Lower lobe of right lung (tissue), 2 donors: ENCODE measurements at regions of chr10 and their contacts with region 1.

Region 1: GRCh38 chr10:110893559-110894179 is 21.9 kb downstream of the PDCD4 start:
- DNase-seq: no peak
- ATAC-seq: peak; percentile 78
- H3K4me3 ChIP-seq: no peak overlapping the region
- H3K27ac ChIP-seq: no peak overlapping the region
- H3K4me1 ChIP-seq: no peaks in the 10 kb centered on the region
- H3K27me3 ChIP-seq: no peaks in the 10 kb centered on the region
- CTCF ChIP-seq: peak; percentile 67

Region 2: DNA sequence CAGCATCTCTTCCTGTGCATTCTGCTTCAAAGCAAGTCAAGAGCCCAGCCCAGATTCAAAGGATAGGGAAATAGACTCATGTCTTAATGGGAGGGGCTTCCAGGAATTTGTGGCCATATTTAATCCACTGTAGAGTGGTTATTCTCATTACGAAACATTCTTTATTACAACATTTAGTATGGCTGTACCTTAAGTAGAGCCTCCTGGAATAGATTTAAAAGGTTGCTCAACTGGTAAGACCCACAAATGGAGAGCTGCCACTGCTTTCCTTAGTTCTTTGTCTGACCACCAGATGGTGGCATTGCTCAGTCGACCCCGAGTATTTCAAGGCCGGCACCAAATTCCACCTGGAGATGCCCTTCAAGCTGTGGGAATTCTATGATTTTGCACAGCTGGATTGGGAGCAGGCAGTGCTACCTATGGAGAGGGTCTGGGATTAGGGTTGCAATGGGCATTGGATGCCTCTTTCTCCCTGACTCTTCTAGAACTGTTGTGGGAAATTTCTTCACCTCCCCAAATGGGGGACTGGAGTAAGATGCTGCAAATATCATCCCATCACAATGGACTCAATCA is 147.3 kb before region 1 on chr10:
- intact Hi-C with region 1: loop called (anchors 5 kb)
- DNase-seq: no peak
- ATAC-seq: peak; percentile 90
- H3K4me3 ChIP-seq: no peak overlapping the region
- H3K27ac ChIP-seq: no peak overlapping the region
- H3K4me1 ChIP-seq: no peaks in the 10 kb centered on the region
- H3K27me3 ChIP-seq: no peaks in the 10 kb centered on the region
- CTCF ChIP-seq: peak; percentile 85

Region 3: DNA sequence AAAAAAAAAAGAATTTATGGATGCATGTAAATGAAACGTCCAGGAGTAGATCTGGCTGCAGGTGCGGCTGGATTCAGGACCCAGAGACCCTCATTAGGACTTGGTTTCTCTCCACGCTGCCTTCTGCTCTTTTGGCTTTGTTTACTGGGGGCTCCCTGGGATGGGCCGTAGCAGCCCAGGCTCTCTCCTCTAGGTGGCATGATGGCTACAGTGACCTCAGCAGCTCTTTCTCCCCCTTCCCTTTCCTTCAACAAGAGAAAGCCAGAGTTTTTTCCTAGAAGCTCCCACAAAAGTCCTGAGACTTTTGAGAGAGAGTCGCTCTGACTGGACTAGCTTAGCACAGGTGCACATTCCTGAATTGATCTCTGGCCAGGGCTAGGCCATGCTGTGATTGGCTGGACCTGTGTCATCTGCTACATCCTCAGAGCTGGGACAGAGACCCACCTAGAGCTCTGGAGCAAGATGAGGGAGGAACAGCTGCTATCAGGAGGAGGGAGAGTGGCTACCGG is 89.8 kb before region 1 on chr10:
- intact Hi-C with region 1: loop called (anchors 10 kb)
- DNase-seq: no peak
- ATAC-seq: peak; percentile 79 to 86
- H3K4me3 ChIP-seq: no peak overlapping the region
- H3K27ac ChIP-seq: no peak overlapping the region
- H3K4me1 ChIP-seq: peaks cover 24% of the 10 kb centered on the region
- H3K27me3 ChIP-seq: peaks cover 5% of the 10 kb centered on the region
- CTCF ChIP-seq: peak; percentile 74

Region 4: GRCh38 chr10:111199587-111199986 is 305.9 kb after region 1 on chr10:
- intact Hi-C with region 1: no loop called
- DNase-seq: no peak
- ATAC-seq: no peak
- H3K4me3 ChIP-seq: no peak overlapping the region
- H3K27ac ChIP-seq: no peak overlapping the region
- H3K4me1 ChIP-seq: no peaks in the 10 kb centered on the region
- H3K27me3 ChIP-seq: no peaks in the 10 kb centered on the region
- CTCF ChIP-seq: no peak